A673 (cell line): ENCODE measurements at regions of chr6 and their contacts with region 1.

Region 1: GRCh38 chr6:53189554-53189953 is 40.9 kb upstream of the GCM1 start:
- DNase-seq: no peak
- H3K4me3 ChIP-seq: no peak overlapping the region
- H3K27ac ChIP-seq: no peak overlapping the region
- H3K4me1 ChIP-seq: no peaks in the 10 kb centered on the region
- H3K27me3 ChIP-seq: no peaks in the 10 kb centered on the region
- CTCF ChIP-seq: no peak

Region 2: DNA sequence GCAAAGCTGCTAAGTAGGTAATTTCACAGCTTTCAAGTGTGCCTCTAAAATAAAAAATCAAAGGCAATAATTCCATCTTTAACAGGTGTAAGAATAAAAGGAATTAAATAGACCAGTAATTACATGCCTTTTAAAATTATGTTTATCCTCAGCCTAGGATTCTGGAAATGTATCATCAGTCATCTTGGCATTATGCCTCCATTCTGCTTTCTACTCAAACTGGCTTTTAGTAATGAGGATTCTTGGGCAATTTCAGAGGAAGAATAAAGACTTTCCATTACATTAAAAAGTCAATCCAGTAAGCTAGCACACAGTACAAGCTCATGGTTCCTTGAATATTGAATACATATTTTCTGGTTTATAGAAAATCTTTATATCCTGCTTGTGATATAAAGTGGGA is 471.0 kb before region 1 on chr6:
- CTCF ChIA-PET with region 1: no interaction called
- POLR2A ChIA-PET with region 1: no interaction called
- intact Hi-C with region 1: no loop called
- DNase-seq: no peak
- H3K4me3 ChIP-seq: no peak overlapping the region
- H3K27ac ChIP-seq: no peak overlapping the region
- H3K4me1 ChIP-seq: no peaks in the 10 kb centered on the region
- H3K27me3 ChIP-seq: no peaks in the 10 kb centered on the region
- CTCF ChIP-seq: no peak

Region 3: GRCh38 chr6:53159558-53159957 is 30.0 kb before region 1 on chr6:
- CTCF ChIA-PET with region 1: no interaction called
- POLR2A ChIA-PET with region 1: no interaction called
- intact Hi-C with region 1: loop called (anchors 1 kb)
- DNase-seq: peak; percentile 13
- H3K4me3 ChIP-seq: no peak overlapping the region
- H3K27ac ChIP-seq: no peak overlapping the region
- H3K4me1 ChIP-seq: no peaks in the 10 kb centered on the region
- H3K27me3 ChIP-seq: no peaks in the 10 kb centered on the region
- CTCF ChIP-seq: no peak

Region 4: DNA sequence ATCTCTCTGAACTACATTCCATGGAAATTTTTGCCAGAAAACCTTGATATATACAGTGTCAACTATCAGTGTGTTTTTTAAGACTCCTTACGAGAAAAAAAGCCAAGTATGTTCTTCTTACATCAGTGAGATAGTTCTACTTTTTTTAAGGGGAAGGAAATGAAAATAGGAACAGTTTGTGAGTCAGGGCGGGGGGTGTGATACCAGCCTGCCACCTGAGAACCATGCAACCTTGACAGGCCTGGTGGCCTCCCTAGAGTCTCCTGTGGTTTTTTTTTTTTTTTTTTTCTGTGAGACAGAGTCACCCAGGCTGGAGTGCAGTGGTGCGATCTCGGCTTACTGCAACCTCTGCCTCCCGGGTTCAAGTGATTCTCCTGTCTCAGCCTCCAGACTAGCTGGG is 55.4 kb after region 1 on chr6:
- CTCF ChIA-PET with region 1: no interaction called
- POLR2A ChIA-PET with region 1: no interaction called
- intact Hi-C with region 1: no loop called
- DNase-seq: no peak
- H3K4me3 ChIP-seq: no peak overlapping the region
- H3K27ac ChIP-seq: no peak overlapping the region
- H3K4me1 ChIP-seq: no peaks in the 10 kb centered on the region
- H3K27me3 ChIP-seq: no peaks in the 10 kb centered on the region
- CTCF ChIP-seq: no peak

Region 5: DNA sequence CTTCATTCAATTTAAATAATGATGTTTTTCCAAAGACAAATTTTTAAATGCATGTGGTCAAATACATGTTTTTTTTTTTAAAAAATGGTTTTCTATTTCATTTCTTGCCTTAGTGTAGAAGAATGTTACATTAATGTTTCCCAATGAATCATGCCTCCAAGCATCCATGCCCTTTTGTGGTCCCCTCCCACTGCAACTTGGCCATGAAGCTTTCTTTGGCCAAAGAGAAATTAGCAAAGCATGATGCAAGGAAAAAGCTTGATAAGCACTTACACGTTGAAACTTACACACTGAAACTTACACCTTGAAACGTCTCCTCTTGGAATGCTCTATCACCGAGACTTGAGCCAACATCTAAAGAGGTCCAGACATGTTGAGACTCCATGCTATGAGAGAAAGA is 252.2 kb after region 1 on chr6:
- CTCF ChIA-PET with region 1: no interaction called
- POLR2A ChIA-PET with region 1: no interaction called
- intact Hi-C with region 1: no loop called
- DNase-seq: no peak
- H3K4me3 ChIP-seq: no peak overlapping the region
- H3K27ac ChIP-seq: no peak overlapping the region
- H3K4me1 ChIP-seq: no peaks in the 10 kb centered on the region
- H3K27me3 ChIP-seq: no peaks in the 10 kb centered on the region
- CTCF ChIP-seq: no peak